PC-3 (cell line): ENCODE measurements at regions of chr7 and their contacts with region 1.

Region 1: DNA sequence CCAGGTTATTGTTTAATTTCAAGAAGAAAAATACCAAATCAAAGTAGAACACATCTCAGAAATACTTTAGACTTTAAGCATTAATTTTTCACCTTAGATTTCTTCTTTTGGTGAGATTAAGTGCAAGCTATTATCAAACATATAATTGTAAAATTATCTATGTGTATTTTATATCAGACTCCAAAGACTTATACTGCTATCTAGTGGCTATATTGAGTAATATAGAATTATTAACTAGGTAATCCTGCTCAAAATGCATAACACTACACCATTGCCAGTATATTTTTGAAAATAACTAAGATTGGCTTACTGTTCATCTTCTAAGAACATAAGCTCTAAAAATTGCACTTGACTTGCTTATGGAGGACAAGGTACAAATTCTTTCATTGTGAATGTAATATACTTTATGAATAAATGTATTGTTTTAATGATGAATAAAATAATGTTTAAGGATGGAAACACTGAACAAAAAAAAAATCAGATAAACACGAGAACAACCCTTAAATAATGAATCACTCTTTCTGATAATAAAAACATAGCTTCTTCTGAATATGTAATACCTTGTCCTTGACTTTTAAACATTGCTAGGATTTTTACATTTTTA is 86.7 kb upstream of the GNAI1 start:
- DNase-seq: peak; percentile 37
- ATAC-seq: peak; percentile 60; the same call in 1 of the 2 replicates
- H3K4me3 ChIP-seq: no peak overlapping the region
- H3K27ac ChIP-seq: no peak overlapping the region
- H3K4me1 ChIP-seq: no peaks in the 10 kb centered on the region
- H3K27me3 ChIP-seq: no peaks in the 10 kb centered on the region
- CTCF ChIP-seq: peak; percentile 62

Region 2: DNA sequence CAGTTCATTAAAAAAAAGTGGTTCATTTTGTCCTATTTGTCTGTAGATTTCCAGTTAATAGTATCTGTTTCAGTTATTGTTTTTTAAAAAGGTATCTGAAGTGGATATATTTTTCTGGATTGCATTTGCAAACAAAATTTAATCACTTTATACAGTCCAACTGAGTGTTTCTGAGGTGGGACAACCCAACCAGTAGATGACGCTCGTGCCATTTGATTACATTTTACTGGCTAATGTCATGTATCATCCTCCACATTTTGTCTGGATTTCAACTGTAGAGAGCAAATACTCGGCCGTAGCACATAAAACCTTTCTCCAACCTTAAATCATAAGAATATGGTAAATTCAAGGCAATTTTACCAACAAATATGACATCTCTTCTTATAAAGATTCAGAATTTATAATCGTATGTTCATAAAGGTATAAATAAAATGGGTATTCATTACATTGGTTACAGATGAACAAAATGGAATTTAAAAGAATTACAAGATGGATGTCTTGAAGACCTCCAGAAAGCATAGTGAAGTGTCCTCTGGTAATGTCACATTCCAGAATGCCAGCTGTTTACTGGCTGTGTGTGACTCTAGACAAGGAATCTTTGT is 1460.4 kb before region 1 on chr7:
- CTCF ChIA-PET with region 1: no interaction called
- POLR2A ChIA-PET with region 1: no interaction called
- intact Hi-C with region 1: loop called (anchors 5 kb)
- DNase-seq: peak; percentile 70
- ATAC-seq: peak; percentile 71
- H3K4me3 ChIP-seq: no peak overlapping the region
- H3K27ac ChIP-seq: no peak overlapping the region
- H3K4me1 ChIP-seq: no peaks in the 10 kb centered on the region
- H3K27me3 ChIP-seq: peaks cover 4% of the 10 kb centered on the region; the same call in 1 of the 2 replicates
- CTCF ChIP-seq: peak; percentile 88

Region 3: GRCh38 chr7:79298145-79298760 is 749.7 kb before region 1 on chr7:
- CTCF ChIA-PET with region 1: interaction called, 5 read pairs
- POLR2A ChIA-PET with region 1: no interaction called
- intact Hi-C with region 1: loop called (anchors 1 kb)
- DNase-seq: peak; percentile 77
- ATAC-seq: no peak
- H3K4me3 ChIP-seq: no peak overlapping the region
- H3K27ac ChIP-seq: no peak overlapping the region
- H3K4me1 ChIP-seq: peaks cover 14% of the 10 kb centered on the region
- H3K27me3 ChIP-seq: no peaks in the 10 kb centered on the region
- CTCF ChIP-seq: peak; percentile 73

Region 4: DNA sequence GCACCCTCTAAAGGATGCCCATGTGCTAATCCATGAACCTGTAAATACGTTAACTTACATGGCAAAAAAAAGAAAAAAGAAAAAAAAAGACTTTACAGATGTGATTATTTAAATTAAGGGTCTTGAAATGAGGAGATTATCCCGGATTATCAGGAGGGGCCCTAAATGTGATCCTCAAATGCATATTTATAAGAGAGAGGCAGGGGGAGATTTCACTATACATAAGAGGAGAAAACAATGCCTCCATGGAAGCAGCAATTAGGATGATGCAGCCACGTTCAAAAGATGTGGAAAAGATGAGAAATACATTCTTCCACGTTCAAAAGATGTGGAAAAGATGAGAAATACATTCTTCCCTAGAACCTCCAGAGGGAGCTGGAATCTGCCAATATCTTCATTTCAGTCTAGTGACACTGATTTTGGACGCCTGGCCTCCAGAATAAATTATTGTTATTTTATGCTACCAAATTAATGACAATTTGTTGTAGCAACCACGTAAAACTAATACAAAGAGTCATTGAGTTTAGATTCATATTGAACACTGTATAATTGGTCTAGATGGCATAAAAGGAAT is 241.7 kb before region 1 on chr7:
- CTCF ChIA-PET with region 1: no interaction called
- POLR2A ChIA-PET with region 1: no interaction called
- intact Hi-C with region 1: loop called (anchors 1 kb)
- DNase-seq: peak; percentile 55
- ATAC-seq: peak; percentile 65
- H3K4me3 ChIP-seq: no peak overlapping the region
- H3K27ac ChIP-seq: no peak overlapping the region
- H3K4me1 ChIP-seq: no peaks in the 10 kb centered on the region
- H3K27me3 ChIP-seq: no peaks in the 10 kb centered on the region
- CTCF ChIP-seq: peak; percentile 69

Region 5: GRCh38 chr7:80107278-80107677 is 59.3 kb after region 1 on chr7:
- CTCF ChIA-PET with region 1: interaction called, 12 read pairs
- POLR2A ChIA-PET with region 1: no interaction called
- intact Hi-C with region 1: no loop called
- DNase-seq: no peak
- ATAC-seq: no peak
- H3K4me3 ChIP-seq: no peak overlapping the region
- H3K27ac ChIP-seq: no peak overlapping the region
- H3K4me1 ChIP-seq: no peaks in the 10 kb centered on the region
- H3K27me3 ChIP-seq: no peaks in the 10 kb centered on the region
- CTCF ChIP-seq: no peak

Region 6: GRCh38 chr7:80197627-80198026 is 149.7 kb after region 1 on chr7:
- CTCF ChIA-PET with region 1: no interaction called
- POLR2A ChIA-PET with region 1: no interaction called
- intact Hi-C with region 1: no loop called
- DNase-seq: no peak
- ATAC-seq: no peak
- H3K4me3 ChIP-seq: no peak overlapping the region
- H3K27ac ChIP-seq: no peak overlapping the region
- H3K4me1 ChIP-seq: no peaks in the 10 kb centered on the region
- H3K27me3 ChIP-seq: no peaks in the 10 kb centered on the region
- CTCF ChIP-seq: no peak